Activated naive CD4-positive, alpha-beta T cell treated with anti-CD3 and anti-CD28 coated beads for 36 hours (primary cell): ENCODE measurements at regions of chr13 and their contacts with region 1.

Region 1: DNA sequence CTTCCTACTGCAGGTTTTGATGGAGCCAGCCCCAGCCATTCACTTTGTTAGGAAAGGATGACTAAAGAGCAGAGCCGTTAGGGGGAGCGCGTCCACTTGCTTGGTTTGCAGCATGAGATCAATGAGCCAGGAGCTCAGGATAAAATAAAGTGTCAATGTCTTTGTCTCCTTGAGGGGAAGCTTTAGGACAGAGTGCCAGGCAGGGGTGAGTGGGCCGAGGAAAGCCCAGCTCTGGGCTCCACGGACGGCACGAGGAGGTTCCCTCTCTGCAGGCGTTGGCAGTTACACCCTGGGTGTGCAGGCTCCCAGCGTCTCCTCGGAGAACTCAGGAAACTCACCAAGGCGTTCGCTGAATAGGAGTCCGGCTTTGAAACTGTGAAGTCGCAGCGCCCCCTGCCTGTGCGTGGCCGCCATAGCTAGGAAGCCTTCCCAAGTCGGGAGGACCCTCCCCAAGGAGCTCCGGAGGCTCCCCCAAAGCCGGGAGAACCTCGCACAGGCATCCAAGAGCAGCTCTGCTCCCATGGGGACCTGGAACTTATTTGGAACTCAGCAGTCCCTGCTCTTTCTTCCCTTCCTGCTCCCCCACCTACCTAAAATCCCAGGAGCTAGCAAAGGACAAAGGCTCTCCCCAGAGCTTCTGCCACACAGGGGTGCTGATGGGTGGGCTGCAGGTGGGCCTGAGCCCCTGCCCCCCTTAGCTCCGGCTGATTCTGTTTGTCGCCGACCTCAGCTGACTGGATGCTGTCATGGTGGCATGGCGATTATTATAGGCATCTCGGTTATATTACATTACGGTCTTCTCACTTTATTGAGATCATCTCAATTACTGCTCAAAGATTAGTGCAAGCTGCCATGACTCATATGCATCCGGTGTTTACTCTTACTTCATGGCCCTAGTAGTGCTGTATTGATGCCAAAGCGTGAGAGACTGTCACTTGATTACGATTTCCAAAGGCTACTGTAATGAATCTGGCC is 34.4 kb downstream of the GSX1 start:
- DNase-seq: peak; percentile 77
- H3K4me3 Mint-ChIP-seq: no peak overlapping the region
- H3K27ac Mint-ChIP-seq: no peak overlapping the region
- H3K4me1 Mint-ChIP-seq: no peaks in the 10 kb centered on the region
- H3K27me3 Mint-ChIP-seq: peaks cover 58% of the 10 kb centered on the region

Region 2: DNA sequence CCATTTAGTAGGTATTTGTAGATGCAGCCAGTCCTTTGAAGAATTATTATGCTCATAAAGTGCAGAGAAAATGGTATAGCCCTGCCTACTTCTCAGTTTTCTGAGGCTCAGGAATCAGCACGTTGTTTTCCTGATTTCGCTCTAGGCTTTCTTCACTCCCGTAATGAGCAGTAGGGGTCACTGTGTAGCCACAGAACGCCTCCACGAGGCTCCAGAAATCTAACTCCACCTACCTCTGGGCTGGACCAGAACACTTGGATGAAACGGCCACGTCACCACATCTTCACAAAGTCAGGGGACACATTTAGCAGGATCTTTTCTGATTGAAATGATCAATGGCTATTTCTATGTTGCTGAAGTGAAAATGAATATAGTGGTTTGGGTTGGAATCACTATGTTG is 452.0 kb before region 1 on chr13:
- CTCF ChIA-PET with region 1: interaction called, 143 read pairs
- intact Hi-C with region 1: loop called (anchors 1 kb)
- DNase-seq: peak; percentile 72
- H3K4me3 Mint-ChIP-seq: no peak overlapping the region
- H3K27ac Mint-ChIP-seq: no peak overlapping the region
- H3K4me1 Mint-ChIP-seq: peaks cover 2% of the 10 kb centered on the region
- H3K27me3 Mint-ChIP-seq: peaks cover 18% of the 10 kb centered on the region

Region 3: DNA sequence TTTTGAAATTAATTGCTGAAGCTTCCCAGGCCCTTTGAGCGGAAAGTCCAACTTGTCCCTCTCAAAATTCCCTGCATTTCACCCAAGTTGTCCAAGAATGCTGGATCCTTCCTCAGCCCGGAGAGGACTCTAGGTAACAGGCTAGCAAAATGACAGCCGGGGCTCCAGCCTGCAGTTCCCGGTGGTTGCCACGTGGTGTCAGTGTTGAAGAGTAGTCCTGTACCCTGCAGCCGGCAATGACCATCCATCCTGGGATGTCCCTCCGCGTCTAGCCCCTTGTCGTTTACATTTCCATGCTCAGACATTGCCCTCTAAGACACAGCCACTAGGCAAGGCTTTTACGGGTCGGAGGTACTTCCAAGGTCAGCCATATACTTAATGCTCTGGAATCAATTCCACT is 344.9 kb before region 1 on chr13:
- CTCF ChIA-PET with region 1: interaction called, 4 read pairs
- intact Hi-C with region 1: loop called (anchors 1 kb)
- DNase-seq: peak; percentile 63
- H3K4me3 Mint-ChIP-seq: no peak overlapping the region
- H3K27ac Mint-ChIP-seq: no peak overlapping the region
- H3K4me1 Mint-ChIP-seq: peaks cover 5% of the 10 kb centered on the region
- H3K27me3 Mint-ChIP-seq: no peaks in the 10 kb centered on the region

Region 4: DNA sequence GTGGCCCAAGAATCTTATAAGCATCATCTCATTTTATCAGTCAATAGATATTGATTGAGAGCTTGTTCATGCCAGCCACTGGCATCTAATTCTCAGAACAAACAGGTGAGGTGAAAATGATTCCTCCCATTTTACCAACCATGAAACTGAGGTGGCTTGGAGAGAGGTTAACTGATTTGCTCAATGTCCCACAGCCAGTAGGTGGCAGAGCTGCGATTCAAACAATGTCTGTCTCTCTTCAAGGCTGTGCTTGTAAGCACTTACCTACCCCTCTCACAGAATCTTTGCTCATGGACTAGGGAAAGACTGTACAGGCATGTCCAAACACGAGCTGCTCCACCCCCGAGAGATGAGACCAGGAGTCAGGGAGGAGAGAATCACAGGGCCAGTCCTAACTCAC is 55.9 kb before region 1 on chr13:
- CTCF ChIA-PET with region 1: interaction called, 54 read pairs
- intact Hi-C with region 1: loop called (anchors 1 kb)
- DNase-seq: peak; percentile 55
- H3K4me3 Mint-ChIP-seq: no peak overlapping the region
- H3K27ac Mint-ChIP-seq: no peak overlapping the region
- H3K4me1 Mint-ChIP-seq: no peaks in the 10 kb centered on the region
- H3K27me3 Mint-ChIP-seq: peaks cover 28% of the 10 kb centered on the region

Region 5: GRCh38 chr13:27810461-27810860 is 16.2 kb before region 1 on chr13:
- CTCF ChIA-PET with region 1: interaction called, 20 read pairs
- intact Hi-C with region 1: no loop called
- DNase-seq: no peak
- H3K4me3 Mint-ChIP-seq: no peak overlapping the region
- H3K27ac Mint-ChIP-seq: no peak overlapping the region
- H3K4me1 Mint-ChIP-seq: no peaks in the 10 kb centered on the region
- H3K27me3 Mint-ChIP-seq: peaks cover 39% of the 10 kb centered on the region

Region 6: GRCh38 chr13:27968316-27969081 is 141.8 kb after region 1 on chr13:
- CTCF ChIA-PET with region 1: interaction called, 17 read pairs
- intact Hi-C with region 1: no loop called
- DNase-seq: no peak
- H3K4me3 Mint-ChIP-seq: no peak overlapping the region
- H3K27ac Mint-ChIP-seq: no peak overlapping the region
- H3K4me1 Mint-ChIP-seq: peaks cover 25% of the 10 kb centered on the region
- H3K27me3 Mint-ChIP-seq: peaks cover 78% of the 10 kb centered on the region

Region 7: GRCh38 chr13:28204690-28205443 is 378.2 kb after region 1 on chr13:
- CTCF ChIA-PET with region 1: no interaction called
- intact Hi-C with region 1: no loop called
- DNase-seq: peak; percentile 75
- H3K4me3 Mint-ChIP-seq: no peak overlapping the region
- H3K27ac Mint-ChIP-seq: no peak overlapping the region
- H3K4me1 Mint-ChIP-seq: peaks cover 38% of the 10 kb centered on the region
- H3K27me3 Mint-ChIP-seq: no peaks in the 10 kb centered on the region